ENCODE measurements at regions of chr3 and their contacts with region 1.

Region 1: DNA sequence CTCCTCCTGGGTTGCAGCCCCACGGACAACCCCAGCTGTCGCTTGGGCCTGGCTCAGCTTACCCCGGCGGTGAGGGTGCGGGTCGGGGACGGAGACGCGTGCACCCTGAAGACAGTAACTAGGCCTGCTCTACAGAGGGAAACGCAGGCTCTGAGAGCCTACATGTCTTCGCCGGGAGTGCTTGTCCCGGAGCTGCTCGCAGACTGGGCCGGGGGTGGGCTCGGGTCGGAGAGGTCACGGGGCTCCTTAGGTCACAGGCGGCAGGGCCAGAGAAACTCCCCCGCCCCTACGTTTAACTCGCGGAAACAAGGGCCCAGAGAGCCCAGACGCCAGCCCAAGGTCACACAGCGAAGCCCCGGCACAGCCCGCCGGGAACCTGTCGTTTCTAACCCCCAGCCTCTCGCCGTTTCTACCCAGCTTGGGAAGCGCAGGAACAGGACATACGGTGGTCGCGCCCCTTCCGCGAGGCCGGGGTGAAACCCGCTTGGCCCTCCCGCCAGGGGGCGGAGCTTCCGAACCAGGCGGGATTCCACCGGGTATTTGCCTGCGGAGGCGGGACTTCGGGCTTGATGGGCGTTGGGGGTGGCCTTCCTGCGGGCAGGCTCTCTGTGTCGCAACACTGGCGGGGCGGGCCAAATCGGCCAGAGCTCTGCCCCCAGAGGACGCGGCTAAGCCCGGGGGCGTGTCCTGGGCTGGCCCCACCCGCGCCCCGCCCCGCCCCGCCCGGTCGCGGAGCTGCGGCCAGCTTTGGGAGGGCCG is at the start of gene HDAC11:
- DNase-seq: peak; percentile 98 to 100 (median 99)
- H3K4me3 ChIP-seq: peak within 1 kb of the TSS; percentile 72 to 97 (median 82)
- H3K27ac ChIP-seq: peak within 1 kb of the TSS; percentile 91 to 100 (median 98)
- H3K27me3 ChIP-seq: no peaks in the 10 kb centered on the region
- CTCF ChIP-seq: peak; percentile 33 to 76 (median 60)
- total RNA-seq, gene HDAC11: 48.3 to 174 (median 79.7) TPM

Region 2: GRCh38 chr3:12663936-12664908 is 815.5 kb before region 1 on chr3 and contains the start of gene RAF1:
- intact Hi-C with region 1: no loop called
- DNase-seq: peak; percentile 97 to 99 (median 98)
- H3K4me3 ChIP-seq: peak within 1 kb of the TSS; percentile 65 to 99 (median 92)
- H3K27ac ChIP-seq: peak within 1 kb of the TSS; percentile 76 to 100 (median 100)
- H3K27me3 ChIP-seq: no peaks in the 10 kb centered on the region
- CTCF ChIP-seq: peak in 31 of 56 donors; percentile 4 to 55 (median 29)
- total RNA-seq, gene RAF1: 58.1 to 110 (median 75.9) TPM

Region 3: DNA sequence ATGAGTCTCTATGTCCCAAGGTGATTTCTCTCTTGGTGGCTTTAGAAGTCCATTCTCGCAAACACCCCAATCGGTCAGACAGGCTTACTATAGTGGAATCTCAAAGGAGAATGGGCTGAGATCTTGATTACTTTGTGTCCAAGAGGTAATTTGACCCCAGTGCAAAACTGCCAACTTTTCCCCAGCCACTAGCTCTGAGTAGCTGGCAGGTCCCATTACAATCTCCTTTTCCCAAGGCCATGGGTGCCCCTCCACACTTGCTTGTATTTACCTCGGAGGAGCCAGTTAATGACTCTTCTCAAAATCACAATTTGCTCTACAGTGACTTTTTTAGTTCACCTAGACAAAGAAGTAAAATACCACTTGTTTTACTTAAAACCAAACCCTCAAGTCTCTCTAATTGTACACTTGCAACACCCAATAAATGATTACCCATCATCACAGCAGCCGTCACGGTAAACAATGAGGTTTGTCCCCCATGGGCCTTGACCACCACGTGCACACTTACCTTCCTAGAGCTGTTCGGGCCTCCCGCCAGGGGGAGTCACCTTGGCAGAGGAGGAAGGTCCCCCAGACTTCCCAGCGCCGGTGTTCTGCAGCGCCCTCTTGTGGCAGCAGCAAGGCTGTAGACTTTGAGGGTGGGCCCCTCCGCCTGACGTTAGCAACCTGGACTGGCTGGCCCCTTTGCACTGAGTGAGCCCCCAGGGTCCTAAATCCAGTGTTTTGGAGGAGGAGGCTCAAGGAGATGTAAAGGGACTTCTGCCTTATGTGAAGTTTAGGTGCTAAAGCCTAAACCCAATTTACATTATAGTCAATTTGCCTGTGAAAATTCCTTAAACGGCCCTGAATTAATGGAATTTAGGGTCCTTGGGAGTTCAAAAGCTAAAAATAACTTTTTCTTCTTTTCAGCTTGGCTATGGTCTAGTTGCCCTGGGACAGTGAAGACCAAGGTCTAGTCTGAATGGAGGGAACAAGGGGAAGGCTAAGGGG is 18.3 kb before region 1 on chr3:
- intact Hi-C with region 1: loop called in 1 of 2 experiments (anchors 2 kb)
- DNase-seq: no peak
- H3K4me3 ChIP-seq: no peak overlapping the region
- H3K27ac ChIP-seq: no peak overlapping the region
- H3K27me3 ChIP-seq: no peaks in the 10 kb centered on the region
- CTCF ChIP-seq: peak in 54 of 56 donors; percentile 15 to 68 (median 53)

Region 4: GRCh38 chr3:13623099-13623654 is 143.4 kb after region 1 on chr3:
- intact Hi-C with region 1: no loop called
- DNase-seq: peak in 1 of 10 donors; percentile 27
- H3K4me3 ChIP-seq: no peak overlapping the region
- H3K27ac ChIP-seq: no peak overlapping the region
- H3K27me3 ChIP-seq: no peaks in the 10 kb centered on the region
- CTCF ChIP-seq: no peak

Region 5: DNA sequence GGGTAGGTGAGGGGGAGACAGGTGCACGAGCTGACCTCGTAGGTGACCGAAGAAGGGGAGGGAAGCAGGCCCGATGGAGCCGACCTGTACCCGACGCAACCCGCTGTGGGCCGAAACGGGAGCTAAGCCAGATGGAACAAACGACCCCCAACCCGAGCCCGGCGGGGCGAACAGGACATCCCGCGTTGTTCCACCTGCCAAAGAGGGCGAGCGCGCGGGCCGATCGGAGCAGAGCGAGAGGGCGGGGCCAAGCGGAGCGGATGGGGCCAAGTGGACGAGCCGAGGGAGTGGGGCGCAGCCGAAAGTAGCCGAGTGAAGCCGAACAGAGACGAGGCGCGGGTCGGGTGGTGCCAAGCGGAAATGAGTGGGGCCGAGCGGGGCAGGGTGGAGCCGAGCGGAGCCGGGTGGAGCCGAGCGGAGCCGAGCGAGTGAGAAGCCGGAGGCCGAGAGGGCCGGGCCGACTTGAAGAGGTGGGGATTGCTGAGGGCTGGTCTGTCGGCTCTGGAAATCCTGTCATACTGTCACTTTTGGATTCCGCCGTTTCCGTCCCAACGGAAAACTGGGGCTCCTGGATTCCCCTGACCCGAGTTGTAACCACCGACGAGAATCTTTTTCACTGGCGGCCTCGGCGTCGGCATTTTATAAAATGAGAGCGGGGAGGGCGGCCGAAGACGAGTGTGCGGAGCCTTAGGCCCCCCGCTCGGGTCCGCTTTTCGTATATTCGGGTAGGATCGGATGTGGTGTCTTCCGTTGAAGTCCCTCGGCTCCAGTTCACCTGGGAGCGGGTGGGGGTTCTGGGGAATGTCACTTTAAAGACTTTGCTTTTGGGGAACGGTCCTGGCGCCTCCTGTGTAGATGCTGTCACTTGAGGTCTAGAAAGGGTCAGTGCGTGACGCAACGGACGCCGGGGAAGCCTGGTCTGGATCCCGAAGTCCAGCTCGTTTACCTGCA is 415.7 kb after region 1 on chr3:
- intact Hi-C with region 1: loop called in 1 of 2 experiments (anchors 10 kb)
- DNase-seq: peak; percentile 75 to 96 (median 91)
- H3K4me3 ChIP-seq: peak overlapping the region; percentile 40 to 90 (median 75)
- H3K27ac ChIP-seq: peak overlapping the region in 46 of 59 donors; percentile 9 to 85 (median 46)
- H3K27me3 ChIP-seq: no peaks in the 10 kb centered on the region
- CTCF ChIP-seq: peak in 17 of 56 donors; percentile 8 to 54 (median 21)